Aorta (tissue), 5 donors: ENCODE measurements at regions of chr17 and their contacts with region 1.

Region 1: GRCh38 chr17:16380640-16381495 is at the start of gene UBB:
- DNase-seq: peak; percentile 98 to 99
- ATAC-seq: peak; percentile 98
- H3K4me3 ChIP-seq: peak within 1 kb of the TSS; percentile 79 to 96
- H3K27ac ChIP-seq: peak within 1 kb of the TSS in 1 of 2 donors; percentile 90
- H3K4me1 ChIP-seq: peaks cover 0 to 5% of the 10 kb centered on the region in 2 donors
- H3K27me3 ChIP-seq: peaks cover 0 to 1% of the 10 kb centered on the region in 2 donors
- total RNA-seq, gene UBB: 809 to 914 TPM

Region 2: DNA sequence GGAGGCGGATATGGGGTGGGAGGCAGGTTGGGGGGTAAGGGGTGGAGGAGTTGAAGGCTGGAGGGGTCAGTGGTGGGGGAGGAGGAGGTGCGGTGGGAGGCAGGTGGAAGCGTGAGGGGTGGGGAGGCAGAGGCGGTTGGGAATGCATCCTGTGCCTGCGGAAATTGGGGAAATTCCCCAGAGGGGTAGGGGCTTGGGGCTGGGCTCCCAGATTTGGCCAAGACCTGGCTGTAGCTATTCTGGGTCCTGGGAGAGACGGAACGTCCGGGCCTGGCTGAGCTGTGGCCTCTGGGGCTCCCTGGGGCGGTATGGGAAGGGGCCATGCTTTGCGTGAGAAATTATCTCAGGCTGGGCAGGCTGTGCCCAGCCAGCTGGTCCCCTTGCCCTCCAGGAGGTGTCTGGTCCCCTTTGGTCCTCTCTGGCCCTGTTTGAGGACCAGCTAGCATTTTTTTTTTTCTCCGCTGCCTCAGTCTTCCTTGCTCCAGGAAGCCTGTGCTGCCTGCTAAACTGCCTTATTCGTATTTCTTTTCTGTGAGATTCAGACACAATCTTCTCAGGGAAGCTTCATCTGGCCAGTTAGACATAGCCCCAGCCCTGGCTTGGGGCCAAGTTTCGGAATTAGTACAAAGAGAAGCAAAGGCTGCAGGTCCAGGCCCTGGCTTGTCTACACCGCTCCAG is 27.2 kb after region 1 on chr17:
- intact Hi-C with region 1: loop called in 1 of 2 experiments (anchors 2 kb)
- DNase-seq: peak; percentile 83 to 86
- ATAC-seq: peak; percentile 74
- H3K4me3 ChIP-seq: no peak overlapping the region
- H3K27ac ChIP-seq: peak overlapping the region in 1 of 2 donors; percentile 28
- H3K4me1 ChIP-seq: no peaks in the 10 kb centered on the region
- H3K27me3 ChIP-seq: no peaks in the 10 kb centered on the region

Region 3: DNA sequence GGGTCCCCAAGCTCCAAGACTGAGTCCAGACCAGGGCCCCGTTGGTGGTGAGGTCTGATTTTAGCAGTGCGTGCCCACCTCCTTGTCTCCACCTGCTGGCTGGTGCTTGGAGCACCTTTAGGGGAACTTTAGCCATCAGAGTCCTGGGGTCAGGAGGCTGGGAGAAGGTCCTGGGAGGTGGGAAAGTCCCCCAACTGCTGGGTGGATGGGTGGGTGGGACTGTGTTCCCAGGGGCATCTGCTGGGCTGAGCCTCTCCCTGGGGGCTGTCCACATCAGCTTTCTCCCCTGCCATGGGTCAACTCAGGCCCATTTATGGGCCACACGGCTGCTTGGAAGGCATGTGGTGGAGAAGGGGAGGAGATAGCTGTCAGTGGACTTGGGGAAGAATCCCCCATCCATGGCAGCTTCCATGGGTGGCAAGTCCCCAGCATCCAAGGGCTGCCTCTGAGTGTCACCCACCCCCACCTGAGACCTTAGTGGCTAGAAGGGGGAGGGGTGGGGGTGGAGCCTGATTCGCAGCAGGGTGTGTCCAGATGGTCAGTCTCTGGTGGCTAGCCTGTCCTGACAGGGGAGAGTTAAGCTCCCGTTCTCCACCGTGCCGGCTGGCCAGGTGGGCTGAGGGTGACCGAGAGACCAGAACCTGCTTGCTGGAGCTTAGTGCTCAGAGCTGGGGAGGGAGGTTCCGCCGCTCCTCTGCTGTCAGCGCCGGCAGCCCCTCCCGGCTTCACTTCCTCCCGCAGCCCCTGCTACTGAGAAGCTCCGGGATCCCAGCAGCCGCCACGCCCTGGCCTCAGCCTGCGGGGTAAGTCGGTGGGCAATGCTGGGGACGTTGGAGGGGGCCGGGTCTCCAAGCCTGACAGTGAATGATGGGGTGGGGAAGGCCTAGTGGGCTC is 34.4 kb after region 1 on chr17 and contains the start of gene TRPV2:
- intact Hi-C with region 1: loop called in 1 of 2 experiments (anchors 5 kb)
- DNase-seq: no peak
- ATAC-seq: no peak
- H3K4me3 ChIP-seq: peak within 1 kb of the TSS; percentile 1 to 3
- H3K27ac ChIP-seq: peak within 1 kb of the TSS in 1 of 2 donors; percentile 20
- H3K4me1 ChIP-seq: no peaks in the 10 kb centered on the region
- H3K27me3 ChIP-seq: no peaks in the 10 kb centered on the region
- total RNA-seq, gene TRPV2: 33.4 to 40.3 TPM

Region 4: GRCh38 chr17:16428098-16428882 is 47.4 kb after region 1 on chr17:
- intact Hi-C with region 1: no loop called
- DNase-seq: no peak
- ATAC-seq: no peak
- H3K4me3 ChIP-seq: no peak overlapping the region
- H3K27ac ChIP-seq: no peak overlapping the region
- H3K4me1 ChIP-seq: no peaks in the 10 kb centered on the region
- H3K27me3 ChIP-seq: no peaks in the 10 kb centered on the region

Region 5: GRCh38 chr17:16438557-16439302 is 57.9 kb after region 1 on chr17:
- intact Hi-C with region 1: loop called in 1 of 2 experiments (anchors 5 kb)
- DNase-seq: peak; percentile 95 to 97
- ATAC-seq: peak; percentile 95
- H3K4me3 ChIP-seq: peak overlapping the region; percentile 64 to 70
- H3K27ac ChIP-seq: peak overlapping the region in 1 of 2 donors; percentile 73
- H3K4me1 ChIP-seq: peaks cover 2 to 5% of the 10 kb centered on the region in 2 donors
- H3K27me3 ChIP-seq: no peaks in the 10 kb centered on the region

Region 6: DNA sequence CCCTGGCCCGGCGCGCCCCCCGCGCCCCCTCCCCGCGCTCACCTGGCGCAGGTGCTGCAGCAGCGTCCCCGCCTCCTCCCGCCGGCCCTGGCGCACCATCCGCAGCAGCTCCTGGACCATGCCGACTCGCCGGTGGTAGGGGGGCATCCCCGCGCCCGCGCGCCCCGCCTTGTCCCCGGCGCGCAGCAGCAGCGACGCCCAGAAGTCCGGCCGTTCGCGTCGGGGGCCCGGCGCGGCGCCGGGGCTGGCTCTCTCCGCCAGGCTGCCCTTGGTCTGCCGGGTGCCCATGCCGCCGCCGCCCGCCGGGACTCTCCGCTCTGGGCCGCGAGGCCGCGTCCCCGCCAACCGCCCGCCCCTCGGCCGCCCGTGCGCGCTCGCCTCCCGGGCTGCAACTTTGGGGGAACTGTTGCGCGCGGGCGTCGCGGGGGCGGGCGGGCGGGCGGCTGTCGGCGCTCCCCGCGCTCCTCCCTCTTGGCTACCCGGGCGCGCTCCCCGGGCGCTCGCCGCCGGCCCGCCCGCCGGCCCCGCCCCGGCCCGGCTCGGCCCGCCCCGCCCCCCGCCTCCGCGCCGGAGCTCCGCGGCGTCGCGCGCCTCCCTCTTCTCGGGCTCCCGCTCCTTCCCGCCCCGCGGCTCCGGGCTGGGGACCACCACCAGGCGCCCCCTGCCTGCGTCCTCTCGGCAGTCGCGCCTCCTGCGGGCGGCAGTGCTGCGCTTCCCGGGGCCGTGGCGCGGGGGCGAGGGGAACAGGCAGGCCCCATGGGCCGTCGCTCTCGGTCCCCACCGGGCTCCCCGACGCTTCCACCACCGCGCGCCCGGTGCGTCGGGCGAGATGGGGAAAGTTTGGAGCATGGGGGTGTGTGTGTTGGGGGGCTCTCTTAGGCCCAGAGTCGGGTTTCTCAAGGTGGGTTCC is 111.1 kb after region 1 on chr17 and contains the start of gene LRRC75A:
- intact Hi-C with region 1: no loop called
- DNase-seq: peak; percentile 64 to 86
- ATAC-seq: peak; percentile 76
- H3K4me3 ChIP-seq: peak within 1 kb of the TSS; percentile 67 to 92
- H3K27ac ChIP-seq: no peak within 1 kb of the TSS
- H3K4me1 ChIP-seq: no peaks in the 10 kb centered on the region
- H3K27me3 ChIP-seq: no peaks in the 10 kb centered on the region
- total RNA-seq, gene LRRC75A: 2.4 to 4.8 TPM